ENCODE measurements at regions of chr2 and their contacts with region 1.

Region 1: DNA sequence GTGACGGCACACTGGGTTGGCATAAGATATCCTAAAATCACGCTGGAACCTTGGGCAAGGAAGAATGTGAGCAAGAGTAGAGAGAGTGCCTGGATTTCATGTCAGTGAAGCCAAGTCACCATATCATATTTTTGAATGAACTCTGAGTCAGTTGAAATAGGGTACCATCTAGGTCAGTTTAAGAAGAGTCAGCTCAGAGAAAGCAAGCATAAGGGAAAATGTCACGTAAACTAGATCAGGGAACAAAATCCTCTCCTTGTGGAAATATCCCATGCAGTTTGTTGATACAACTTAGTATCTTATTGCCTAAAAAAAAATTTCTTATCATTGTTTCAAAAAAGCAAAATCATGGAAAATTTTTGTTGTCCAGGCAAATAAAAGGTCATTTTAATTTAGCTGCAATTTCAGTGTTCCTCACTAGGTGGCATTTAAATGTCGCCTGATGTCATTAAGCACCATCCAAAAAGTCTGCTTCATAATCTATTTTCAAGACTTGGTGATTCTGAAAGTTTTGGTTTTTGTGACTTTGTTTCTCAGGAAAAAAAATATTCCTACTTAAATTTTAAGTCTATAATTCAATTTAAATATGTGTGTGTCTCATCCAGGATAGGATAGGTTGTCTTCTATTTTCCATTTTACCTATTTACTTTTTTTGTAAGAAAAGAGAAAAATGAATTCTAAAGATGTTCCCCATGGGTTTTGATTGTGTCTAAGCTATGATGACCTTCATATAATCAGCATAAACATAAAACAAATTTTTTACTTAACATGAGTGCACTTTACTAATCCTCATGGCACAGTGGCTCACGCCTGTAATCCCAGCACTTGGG is 19.6 kb downstream of the RSAD2 start:
- DNase-seq: no peak
- ATAC-seq: peak; percentile 72
- H3K4me3 Mint-ChIP-seq: no peak overlapping the region
- H3K27ac Mint-ChIP-seq: peak overlapping the region; percentile 4
- H3K4me1 Mint-ChIP-seq: peaks cover 7% of the 10 kb centered on the region
- H3K27me3 Mint-ChIP-seq: no peaks in the 10 kb centered on the region
- CTCF ChIP-seq: peak; percentile 89

Region 2: DNA sequence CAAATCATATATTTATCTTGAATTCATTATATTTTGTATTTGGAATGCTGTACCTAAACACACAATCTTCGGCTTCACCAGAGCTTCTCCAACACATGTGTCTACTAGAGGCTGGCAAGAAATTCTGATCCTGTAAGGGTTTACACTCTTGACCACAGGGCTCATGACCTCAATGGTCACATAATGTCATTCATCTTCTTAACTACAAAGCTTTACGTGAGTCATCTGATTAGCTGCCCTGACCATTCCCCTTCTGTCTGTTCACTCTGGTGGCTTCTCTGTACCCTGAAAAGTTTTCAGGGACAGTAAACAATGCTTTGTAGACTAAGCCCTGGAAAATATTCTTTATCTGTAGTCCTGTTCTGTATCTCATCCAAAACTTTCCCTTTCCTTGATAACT is 455.3 kb before region 1 on chr2:
- CTCF ChIA-PET with region 1: no interaction called
- POLR2A ChIA-PET with region 1: no interaction called
- intact Hi-C with region 1: no loop called
- DNase-seq: no peak
- ATAC-seq: no peak
- H3K4me3 Mint-ChIP-seq: no peak overlapping the region
- H3K27ac Mint-ChIP-seq: no peak overlapping the region
- H3K4me1 Mint-ChIP-seq: no peaks in the 10 kb centered on the region
- H3K27me3 Mint-ChIP-seq: no peaks in the 10 kb centered on the region
- CTCF ChIP-seq: no peak

Region 3: GRCh38 chr2:6865346-6866274 is 31.5 kb before region 1 on chr2 and contains the start of gene CMPK2:
- CTCF ChIA-PET with region 1: interaction called, 16 read pairs
- POLR2A ChIA-PET with region 1: interaction called, 3 read pairs
- intact Hi-C with region 1: no loop called
- DNase-seq: peak; percentile 80
- ATAC-seq: peak; percentile 82
- H3K4me3 Mint-ChIP-seq: peak within 1 kb of the TSS; percentile 75
- H3K27ac Mint-ChIP-seq: peak within 1 kb of the TSS; percentile 84
- H3K4me1 Mint-ChIP-seq: peaks cover 13% of the 10 kb centered on the region
- H3K27me3 Mint-ChIP-seq: no peaks in the 10 kb centered on the region
- CTCF ChIP-seq: no peak
- total RNA-seq, gene CMPK2: 3.2 to 4.5 TPM

Region 4: GRCh38 chr2:6877402-6878304 is 19.5 kb before region 1 on chr2 and contains the start of gene RSAD2:
- CTCF ChIA-PET with region 1: interaction called, 33 read pairs
- POLR2A ChIA-PET with region 1: interaction called, 3 read pairs
- intact Hi-C with region 1: no loop called
- DNase-seq: peak; percentile 40
- ATAC-seq: peak; percentile 80
- H3K4me3 Mint-ChIP-seq: peak within 1 kb of the TSS; percentile 66
- H3K27ac Mint-ChIP-seq: peak within 1 kb of the TSS; percentile 40
- H3K4me1 Mint-ChIP-seq: peaks cover 68% of the 10 kb centered on the region
- H3K27me3 Mint-ChIP-seq: no peaks in the 10 kb centered on the region
- CTCF ChIP-seq: no peak
- total RNA-seq, gene RSAD2: 2.8 to 3.7 TPM

Region 5: DNA sequence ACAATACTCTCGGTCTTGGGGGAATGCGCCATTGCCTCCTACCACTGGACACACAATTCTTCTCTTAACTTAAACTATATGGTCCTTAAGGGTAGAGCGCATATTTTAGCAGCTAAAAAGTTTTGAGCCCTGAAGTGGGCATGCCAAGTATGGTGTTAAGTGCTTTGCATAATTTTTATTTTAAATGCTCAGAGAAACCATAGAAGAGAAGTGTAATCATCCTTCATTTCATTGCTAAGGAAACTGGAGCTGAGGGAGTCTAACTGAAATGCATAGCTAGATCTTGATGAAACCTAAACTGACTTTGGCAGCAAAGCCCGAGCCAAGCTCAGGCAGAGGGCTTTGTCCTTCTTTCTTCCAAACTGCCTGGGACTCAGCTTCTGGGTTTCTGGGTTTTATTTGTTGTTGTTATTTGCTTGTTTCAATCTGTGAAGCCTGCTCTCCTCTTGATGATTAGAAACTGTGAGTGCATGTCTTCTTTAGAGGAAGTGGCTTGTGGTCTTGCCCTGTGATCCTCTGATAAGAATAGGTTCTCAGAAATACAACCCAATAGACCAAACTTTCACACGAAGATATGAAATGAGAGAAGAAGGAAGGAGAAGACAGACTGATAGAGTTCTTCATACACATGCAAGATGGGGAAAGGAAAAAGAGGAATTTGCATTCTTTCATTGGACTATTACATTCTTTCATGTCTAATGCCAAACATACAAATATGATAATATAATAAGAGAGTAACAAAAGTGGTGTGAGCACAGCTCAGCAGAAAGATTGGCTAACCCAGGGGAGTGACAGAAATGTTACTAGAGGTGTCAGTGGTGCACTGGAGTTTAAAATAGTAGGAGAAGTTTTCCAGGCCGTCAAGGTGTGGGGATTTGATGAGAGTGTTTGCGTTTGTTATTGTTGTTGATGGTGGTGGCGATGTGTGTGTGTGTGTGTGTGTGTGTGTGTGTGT is 12.6 kb after region 1 on chr2:
- CTCF ChIA-PET with region 1: interaction called, 80 read pairs
- POLR2A ChIA-PET with region 1: interaction called, 8 read pairs
- intact Hi-C with region 1: no loop called
- DNase-seq: peak; percentile 78
- ATAC-seq: peak; percentile 49
- H3K4me3 Mint-ChIP-seq: peak overlapping the region; percentile 48
- H3K27ac Mint-ChIP-seq: peak overlapping the region; percentile 97
- H3K4me1 Mint-ChIP-seq: peaks cover 88% of the 10 kb centered on the region
- H3K27me3 Mint-ChIP-seq: no peaks in the 10 kb centered on the region
- CTCF ChIP-seq: no peak

Region 6: DNA sequence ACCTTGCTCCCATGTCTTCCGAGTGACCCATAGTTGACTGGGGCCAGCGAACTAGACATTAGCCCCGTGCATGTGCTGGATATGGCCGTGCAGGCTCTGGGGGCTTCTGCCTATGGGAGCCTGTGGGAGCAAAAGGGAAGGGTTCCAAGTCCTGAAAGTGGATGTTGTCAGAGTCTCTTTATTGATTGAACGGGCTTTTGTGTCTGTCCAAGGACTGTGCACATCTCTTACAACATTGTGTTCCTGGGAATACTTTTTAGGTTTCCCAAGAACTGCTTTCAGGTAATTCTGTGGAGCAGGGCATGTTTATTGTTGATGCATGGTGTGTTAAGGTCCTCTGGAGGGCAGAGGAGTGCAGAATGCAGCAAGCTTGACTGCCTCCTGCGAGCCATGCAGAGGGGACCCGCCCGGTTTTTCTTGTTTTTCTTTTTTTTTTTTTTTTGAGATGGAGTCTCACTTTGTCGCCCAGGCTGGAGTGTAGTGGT is 25.1 kb after region 1 on chr2:
- CTCF ChIA-PET with region 1: interaction called, 80 read pairs
- POLR2A ChIA-PET with region 1: interaction called, 4 read pairs
- intact Hi-C with region 1: no loop called
- DNase-seq: no peak
- ATAC-seq: no peak
- H3K4me3 Mint-ChIP-seq: no peak overlapping the region
- H3K27ac Mint-ChIP-seq: no peak overlapping the region
- H3K4me1 Mint-ChIP-seq: peaks cover 64% of the 10 kb centered on the region
- H3K27me3 Mint-ChIP-seq: no peaks in the 10 kb centered on the region
- CTCF ChIP-seq: no peak

Region 7: DNA sequence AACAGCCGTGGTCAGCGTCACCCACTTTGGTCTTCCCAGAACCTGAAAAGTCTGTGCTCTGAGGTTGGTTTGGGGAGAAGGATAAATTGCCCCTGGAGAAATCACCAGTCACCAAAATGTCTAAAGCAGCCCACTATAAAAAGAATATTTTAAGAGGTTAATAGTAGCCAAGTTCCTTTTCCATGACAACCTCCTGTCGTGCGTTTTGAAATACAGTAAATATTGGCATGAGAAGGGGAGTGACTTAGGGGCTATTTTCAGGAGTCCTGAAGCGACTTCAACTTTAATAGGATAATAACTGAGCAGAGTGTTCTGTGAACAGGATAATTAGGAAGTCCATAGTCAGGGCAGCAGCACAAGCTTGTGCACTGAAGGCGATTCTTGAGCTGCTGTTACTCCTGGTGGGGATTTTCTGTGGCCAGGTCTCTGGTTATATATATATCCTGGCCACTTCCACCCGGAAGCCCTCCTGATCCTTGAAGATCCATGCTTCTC is 69.3 kb after region 1 on chr2:
- CTCF ChIA-PET with region 1: no interaction called
- POLR2A ChIA-PET with region 1: no interaction called
- intact Hi-C with region 1: no loop called
- DNase-seq: no peak
- ATAC-seq: no peak
- H3K4me3 Mint-ChIP-seq: no peak overlapping the region
- H3K27ac Mint-ChIP-seq: no peak overlapping the region
- H3K4me1 Mint-ChIP-seq: peaks cover 7% of the 10 kb centered on the region
- H3K27me3 Mint-ChIP-seq: no peaks in the 10 kb centered on the region
- CTCF ChIP-seq: no peak

Region 8: GRCh38 chr2:7014174-7014640 is 117.1 kb after region 1 on chr2:
- CTCF ChIA-PET with region 1: interaction called, 13 read pairs
- POLR2A ChIA-PET with region 1: interaction called, 3 read pairs
- intact Hi-C with region 1: no loop called
- DNase-seq: peak; percentile 41
- ATAC-seq: peak; percentile 78
- H3K4me3 Mint-ChIP-seq: no peak overlapping the region
- H3K27ac Mint-ChIP-seq: no peak overlapping the region
- H3K4me1 Mint-ChIP-seq: peaks cover 17% of the 10 kb centered on the region
- H3K27me3 Mint-ChIP-seq: no peaks in the 10 kb centered on the region
- CTCF ChIP-seq: no peak

Region 9: DNA sequence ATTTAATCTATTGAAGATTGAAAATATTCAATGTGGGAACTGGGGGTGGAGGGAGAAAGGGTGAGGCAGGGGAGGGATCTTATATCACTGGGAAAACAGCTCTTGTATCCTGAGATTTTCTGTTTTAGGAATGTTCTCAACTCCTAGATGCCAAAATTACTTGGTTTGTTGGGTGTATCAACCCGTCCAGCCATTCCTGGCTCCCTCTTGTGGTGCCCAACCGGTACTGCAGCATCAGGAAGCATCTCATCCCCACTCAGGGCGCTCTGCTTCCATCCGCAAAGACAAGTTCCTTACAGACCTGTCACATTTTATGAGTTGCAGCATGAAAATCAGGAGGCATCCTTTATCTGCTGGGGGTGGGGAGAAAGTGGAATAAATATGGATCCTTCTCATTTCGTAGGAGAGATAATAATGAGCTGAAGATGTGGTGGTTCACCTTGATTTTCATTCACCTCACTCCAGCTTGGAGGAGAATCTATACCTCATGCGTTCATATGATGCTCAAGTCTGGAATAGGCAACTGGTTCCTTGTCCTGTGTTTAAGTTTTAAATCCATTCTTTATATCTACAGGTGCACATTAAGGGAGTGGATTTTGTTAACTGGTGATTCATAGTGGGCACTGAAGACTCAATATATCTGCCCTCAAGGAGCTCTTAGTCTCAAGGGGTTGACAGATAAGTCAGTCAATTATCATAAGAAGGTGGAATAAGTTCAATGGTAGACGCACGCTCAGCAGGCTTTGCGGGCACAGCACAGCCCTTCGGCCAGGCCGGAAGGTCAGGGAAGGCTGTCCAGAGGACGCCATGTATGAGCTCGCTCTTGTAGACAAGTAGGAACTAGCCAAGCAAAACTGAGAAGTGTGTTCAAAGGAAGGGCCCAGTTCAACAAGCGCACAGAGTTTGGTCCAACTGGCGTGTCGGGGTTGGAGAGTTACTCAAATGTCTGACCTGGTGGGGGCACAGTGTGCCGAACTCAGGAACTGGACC is 147.4 kb after region 1 on chr2:
- CTCF ChIA-PET with region 1: interaction called, 51 read pairs
- POLR2A ChIA-PET with region 1: interaction called, 4 read pairs
- intact Hi-C with region 1: loop called (anchors 1 kb)
- DNase-seq: peak; percentile 69
- ATAC-seq: peak; percentile 86
- H3K4me3 Mint-ChIP-seq: no peak overlapping the region
- H3K27ac Mint-ChIP-seq: no peak overlapping the region
- H3K4me1 Mint-ChIP-seq: peaks cover 22% of the 10 kb centered on the region
- H3K27me3 Mint-ChIP-seq: no peaks in the 10 kb centered on the region
- CTCF ChIP-seq: peak; percentile 97

Measured in activated CD8-positive, alpha-beta T cell treated with anti-CD3 and anti-CD28 coated beads for 36 hours (primary cell).